Left colon (tissue), 2 donors: ENCODE measurements at regions of chr2 and their contacts with region 1.

Region 1: GRCh38 chr2:157876066-157876787 is at the start of gene ACVR1:
- DNase-seq: peak; percentile 93 to 97
- ATAC-seq: peak; percentile 92
- total RNA-seq, gene ACVR1: 13.6 to 19.1 TPM

Region 2: DNA sequence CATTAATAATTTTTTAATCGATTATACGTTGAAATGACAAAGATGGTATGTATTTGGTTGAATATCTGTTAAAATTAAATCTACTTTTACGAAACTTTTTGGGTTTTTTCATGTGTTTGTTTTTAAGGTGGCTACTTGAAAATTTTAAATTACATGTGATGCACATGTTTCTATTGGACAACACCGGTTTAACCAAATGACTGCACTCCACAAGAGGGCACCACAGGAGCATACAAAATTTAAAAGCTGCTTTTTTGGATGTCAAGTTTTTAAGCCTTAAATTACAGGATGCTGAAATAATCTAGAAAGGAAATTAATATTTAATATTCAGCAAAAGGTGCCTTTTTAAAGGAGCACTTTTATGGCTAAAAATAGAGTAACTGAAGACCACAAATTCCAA is 98.8 kb before region 1 on chr2:
- intact Hi-C with region 1: loop called in 1 of 2 experiments (anchors 2 kb)
- DNase-seq: peak in 1 of 2 donors; percentile 49
- ATAC-seq: peak; percentile 46